HEK293 (cell line): ENCODE measurements at regions of chr2 and their contacts with region 1.

Region 1: GRCh38 chr2:62412347-62412742 is 93.7 kb downstream of the TMEM17 start:
- H3K4me3 ChIP-seq: no peak overlapping the region
- H3K27ac ChIP-seq: no peak overlapping the region
- H3K4me1 ChIP-seq: peaks cover 10% of the 10 kb centered on the region
- CTCF ChIP-seq: no peak

Region 2: DNA sequence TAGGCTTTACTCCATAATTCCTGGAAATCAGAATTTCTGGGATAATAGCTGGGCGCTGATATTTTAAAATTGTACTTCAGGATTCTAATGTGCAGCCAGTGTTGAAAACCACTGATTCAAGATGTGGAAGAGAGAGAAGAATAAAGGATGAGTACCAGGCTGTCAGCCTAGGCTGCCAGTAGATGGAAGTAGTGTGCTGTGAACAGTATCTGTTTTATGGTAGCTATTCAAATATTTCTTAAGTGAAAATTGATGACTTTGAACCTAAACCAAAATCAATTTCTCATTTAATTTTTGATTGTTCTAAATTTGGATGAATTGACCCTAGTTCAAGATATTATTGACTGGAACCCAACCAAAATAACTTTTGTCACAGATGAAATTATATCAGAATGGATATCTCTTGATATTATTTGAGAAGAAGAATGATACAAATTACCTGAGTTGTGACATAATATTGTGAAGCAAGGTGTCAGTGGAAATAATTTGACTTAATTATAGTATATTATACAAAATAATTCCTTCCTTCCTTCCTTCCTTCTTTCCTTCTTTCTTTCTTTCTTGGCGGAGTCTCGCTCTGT is 418.8 kb before region 1 on chr2:
- CTCF ChIA-PET with region 1: interaction called, 26 read pairs
- POLR2A ChIA-PET with region 1: no interaction called
- H3K4me3 ChIP-seq: no peak overlapping the region
- H3K27ac ChIP-seq: no peak overlapping the region
- H3K4me1 ChIP-seq: no peaks in the 10 kb centered on the region
- CTCF ChIP-seq: peak; percentile 51